PC-3 (cell line): ENCODE measurements at regions of chr6 and their contacts with region 1.

Region 1: DNA sequence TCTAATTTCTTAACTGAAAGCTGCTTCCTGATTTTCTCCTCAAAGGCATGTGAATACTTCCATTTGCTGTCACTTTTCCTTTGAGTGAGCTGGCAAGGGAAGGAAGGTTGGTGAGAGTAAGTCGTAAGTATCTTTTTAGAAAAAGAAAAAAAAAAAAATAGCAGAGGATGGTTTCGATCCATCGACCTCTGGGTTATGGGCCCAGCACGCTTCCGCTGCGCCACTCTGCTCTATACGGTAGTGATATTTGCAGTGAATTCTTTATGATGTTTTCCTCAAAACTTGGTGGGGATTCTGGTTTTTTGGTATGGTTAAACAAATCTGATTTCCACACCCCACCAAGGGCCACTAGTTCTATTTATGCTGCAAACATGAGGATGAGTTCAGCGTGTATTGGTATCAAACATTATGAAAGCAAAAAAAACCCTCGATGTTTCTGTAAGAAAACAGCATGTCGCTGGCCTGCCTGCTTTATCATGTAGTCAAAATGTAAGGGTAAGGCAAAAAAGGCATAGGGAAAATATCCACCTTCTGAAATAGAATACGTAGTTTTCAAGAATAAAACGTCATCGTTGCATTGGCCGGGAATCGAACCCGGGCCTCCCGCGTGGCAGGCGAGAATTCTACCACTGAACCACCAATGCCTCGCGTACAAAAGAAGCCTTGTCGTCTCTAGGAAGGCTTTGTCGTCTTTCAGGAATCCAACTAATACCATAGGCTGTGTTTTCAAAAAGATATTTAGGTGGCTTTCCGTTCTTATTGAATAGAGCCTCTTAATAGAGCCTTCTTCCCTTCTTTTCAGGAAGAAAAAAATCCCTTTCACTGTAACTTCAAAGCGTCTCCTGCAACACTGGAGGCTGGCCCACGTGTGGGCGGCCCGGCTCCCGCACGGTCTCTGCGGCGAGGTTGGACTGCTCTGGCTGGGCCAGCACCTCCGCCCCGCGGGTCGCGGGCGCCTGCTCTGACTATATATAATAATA is 9.6 kb downstream of the OR2B2 start:
- DNase-seq: peak; percentile 90
- ATAC-seq: peak; percentile 89
- H3K4me3 ChIP-seq: peak overlapping the region; percentile 72
- H3K27ac ChIP-seq: peak overlapping the region; percentile 5; the same call in 1 of the 2 replicates
- H3K4me1 ChIP-seq: no peaks in the 10 kb centered on the region
- H3K27me3 ChIP-seq: no peaks in the 10 kb centered on the region
- CTCF ChIP-seq: no peak

Region 2: GRCh38 chr6:27809939-27810767 is 92.5 kb before region 1 on chr6:
- CTCF ChIA-PET with region 1: no interaction called
- POLR2A ChIA-PET with region 1: no interaction called
- intact Hi-C with region 1: no loop called
- DNase-seq: peak; percentile 99
- ATAC-seq: peak; percentile 28
- H3K4me3 ChIP-seq: peak overlapping the region; percentile 76
- H3K27ac ChIP-seq: peak overlapping the region; percentile 65
- H3K4me1 ChIP-seq: peaks cover 28% of the 10 kb centered on the region
- H3K27me3 ChIP-seq: no peaks in the 10 kb centered on the region
- CTCF ChIP-seq: 0 out of 2 replicates have a peak, but pooled peaks have one; percentile 14

Region 3: GRCh38 chr6:28212510-28213212 is 310.0 kb after region 1 on chr6:
- CTCF ChIA-PET with region 1: no interaction called
- POLR2A ChIA-PET with region 1: no interaction called
- intact Hi-C with region 1: loop called (anchors 1 kb)
- DNase-seq: peak; percentile 95
- ATAC-seq: peak; percentile 87
- H3K4me3 ChIP-seq: peak overlapping the region; percentile 84
- H3K27ac ChIP-seq: 0 out of 2 replicates have a peak overlapping the region, but pooled peaks have one; percentile 7
- H3K4me1 ChIP-seq: peaks cover 9% of the 10 kb centered on the region
- H3K27me3 ChIP-seq: no peaks in the 10 kb centered on the region
- CTCF ChIP-seq: peak; percentile 56

Region 4: GRCh38 chr6:28225056-28225834 is 322.6 kb after region 1 on chr6 and contains the start of gene ZSCAN9:
- CTCF ChIA-PET with region 1: no interaction called
- POLR2A ChIA-PET with region 1: interaction called, 21 read pairs
- intact Hi-C with region 1: no loop called
- DNase-seq: peak; percentile 93
- ATAC-seq: peak; percentile 93
- H3K4me3 ChIP-seq: peak within 1 kb of the TSS; percentile 92
- H3K27ac ChIP-seq: peak within 1 kb of the TSS; percentile 42
- H3K4me1 ChIP-seq: peaks cover 20% of the 10 kb centered on the region
- H3K27me3 ChIP-seq: no peaks in the 10 kb centered on the region
- CTCF ChIP-seq: no peak
- total RNA-seq, gene ZSCAN9: 10.8 and 11.7 TPM in 2 replicates